ENCODE measurements at regions of chr19 and their contacts with region 1.

Region 1: GRCh38 chr19:58261968-58262921 is 16.5 kb upstream of the ZNF8 start:
- DNase-seq: no peak
- H3K4me3 ChIP-seq: no peak overlapping the region
- H3K27ac ChIP-seq: no peak overlapping the region
- H3K4me1 ChIP-seq: no peaks in the 10 kb centered on the region
- H3K27me3 ChIP-seq: no peaks in the 10 kb centered on the region
- CTCF ChIP-seq: no peak
- EP300 ChIP-seq: no peak
- POLR2A ChIP-seq: no peak

Region 2: DNA sequence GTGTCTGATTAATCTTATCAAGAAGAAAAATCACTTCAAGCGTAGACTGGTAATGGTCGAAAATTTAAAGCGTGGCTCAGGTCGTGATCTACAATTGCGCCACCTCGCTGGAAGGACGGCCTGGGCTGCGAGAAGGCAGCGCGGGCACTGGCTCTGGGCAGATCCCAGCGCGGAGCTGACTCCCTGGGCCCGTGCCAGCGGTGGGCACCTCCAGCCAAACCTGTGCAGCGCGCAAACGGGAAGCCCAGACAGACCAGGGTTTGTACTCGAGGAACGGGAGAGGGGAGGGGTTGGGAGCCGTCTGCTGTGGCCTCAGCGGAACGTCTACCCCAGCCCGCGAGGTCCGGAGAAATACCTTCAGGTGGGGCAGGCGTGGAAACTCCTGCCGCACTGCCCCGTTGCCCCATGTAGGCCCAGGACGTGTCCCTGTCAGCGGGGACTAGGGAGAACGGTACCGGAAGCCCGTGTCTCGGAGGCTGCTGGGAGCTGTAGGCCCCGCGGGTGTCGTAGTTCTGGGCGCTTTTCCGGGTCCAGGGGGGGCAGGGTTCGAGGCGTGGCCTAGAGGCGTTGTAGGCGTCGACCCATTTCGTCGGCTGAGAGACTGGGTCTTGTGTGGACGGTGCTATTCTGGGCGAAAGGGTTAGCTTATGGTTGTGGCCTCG is 58.3 kb before region 1 on chr19:
- intact Hi-C with region 1: loop called (anchors 5 kb)
- DNase-seq: no peak
- H3K4me3 ChIP-seq: no peak overlapping the region
- H3K27ac ChIP-seq: no peak overlapping the region
- H3K4me1 ChIP-seq: no peaks in the 10 kb centered on the region
- H3K27me3 ChIP-seq: no peaks in the 10 kb centered on the region
- CTCF ChIP-seq: no peak
- EP300 ChIP-seq: no peak
- POLR2A ChIP-seq: no peak

Region 3: GRCh38 chr19:58400916-58401839 is 138.9 kb after region 1 on chr19:
- intact Hi-C with region 1: no loop called
- DNase-seq: peak; percentile 100
- H3K4me3 ChIP-seq: peak overlapping the region; percentile 60 to 67 (median 65)
- H3K27ac ChIP-seq: peak overlapping the region; percentile 70 to 81 (median 70)
- H3K4me1 ChIP-seq: peaks cover 14 to 32% (median 27%) of the 10 kb centered on the region in 4 donors
- H3K27me3 ChIP-seq: peaks cover 0 to 18% (median 8%) of the 10 kb centered on the region in 4 donors
- CTCF ChIP-seq: peak in 1 of 3 experiments; percentile 17
- EP300 ChIP-seq: no peak
- POLR2A ChIP-seq: no peak

Measured in esophagus muscularis mucosa (tissue), 4 donors.